Astrocyte of the cerebellum (primary cell): ENCODE measurements at regions of chr5 and their contacts with region 1.

Region 1: GRCh38 chr5:53942724-53943123 is 367.6 kb downstream of the ARL15 start:
- DNase-seq: no peak
- H3K4me3 ChIP-seq: no peak overlapping the region
- CTCF ChIP-seq: no peak

Region 2: DNA sequence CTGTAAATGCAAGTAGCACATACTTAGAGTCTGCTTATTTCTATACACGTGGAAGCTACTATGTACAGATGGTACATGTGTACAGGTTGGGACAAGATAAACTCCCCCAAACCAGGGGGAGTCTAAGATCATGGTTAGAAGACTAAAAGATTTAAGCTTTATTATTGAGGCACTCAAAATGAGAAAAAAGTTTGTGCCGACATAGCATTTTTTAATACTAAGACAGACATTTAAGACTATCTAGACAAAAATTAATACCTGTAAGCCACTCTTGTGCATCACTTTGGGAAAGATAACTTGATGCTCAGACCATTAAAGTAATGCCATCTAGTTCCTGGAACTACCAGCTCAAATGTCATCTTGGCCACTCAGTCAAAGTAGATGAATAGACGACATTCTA is 88.3 kb after region 1 on chr5:
- in situ Hi-C with region 1: loop called (anchors 5 kb)
- DNase-seq: no peak
- H3K4me3 ChIP-seq: no peak overlapping the region
- CTCF ChIP-seq: no peak